ENCODE measurements at regions of chr6 and their contacts with region 1.

Region 1: GRCh38 chr6:30769088-30769852 is 24.9 kb upstream of the IER3 start:
- DNase-seq: peak; percentile 91
- H3K4me3 Mint-ChIP-seq: peak overlapping the region; percentile 76
- H3K27ac Mint-ChIP-seq: peak overlapping the region; percentile 97
- H3K4me1 Mint-ChIP-seq: peaks cover 75% of the 10 kb centered on the region
- H3K27me3 Mint-ChIP-seq: peaks cover 2% of the 10 kb centered on the region

Region 2: GRCh38 chr6:30258204-30258603 is 511.1 kb before region 1 on chr6:
- intact Hi-C with region 1: no loop called
- DNase-seq: peak; percentile 60
- H3K4me3 Mint-ChIP-seq: peak overlapping the region; percentile 13
- H3K27ac Mint-ChIP-seq: no peak overlapping the region
- H3K4me1 Mint-ChIP-seq: peaks cover 13% of the 10 kb centered on the region
- H3K27me3 Mint-ChIP-seq: peaks cover 33% of the 10 kb centered on the region

Region 3: GRCh38 chr6:30787954-30788353 is 18.7 kb after region 1 on chr6:
- intact Hi-C with region 1: loop called (anchors 1 kb)
- DNase-seq: peak; percentile 82
- H3K4me3 Mint-ChIP-seq: peak overlapping the region; percentile 72
- H3K27ac Mint-ChIP-seq: peak overlapping the region; percentile 94
- H3K4me1 Mint-ChIP-seq: peaks cover 55% of the 10 kb centered on the region
- H3K27me3 Mint-ChIP-seq: no peaks in the 10 kb centered on the region

Region 4: GRCh38 chr6:31525932-31526591 is 756.8 kb after region 1 on chr6:
- intact Hi-C with region 1: no loop called
- DNase-seq: no peak
- H3K4me3 Mint-ChIP-seq: no peak overlapping the region
- H3K27ac Mint-ChIP-seq: no peak overlapping the region
- H3K4me1 Mint-ChIP-seq: peaks cover 2% of the 10 kb centered on the region
- H3K27me3 Mint-ChIP-seq: peaks cover 9% of the 10 kb centered on the region